ENCODE measurements at regions of chr10 and their contacts with region 1.

Region 1: DNA sequence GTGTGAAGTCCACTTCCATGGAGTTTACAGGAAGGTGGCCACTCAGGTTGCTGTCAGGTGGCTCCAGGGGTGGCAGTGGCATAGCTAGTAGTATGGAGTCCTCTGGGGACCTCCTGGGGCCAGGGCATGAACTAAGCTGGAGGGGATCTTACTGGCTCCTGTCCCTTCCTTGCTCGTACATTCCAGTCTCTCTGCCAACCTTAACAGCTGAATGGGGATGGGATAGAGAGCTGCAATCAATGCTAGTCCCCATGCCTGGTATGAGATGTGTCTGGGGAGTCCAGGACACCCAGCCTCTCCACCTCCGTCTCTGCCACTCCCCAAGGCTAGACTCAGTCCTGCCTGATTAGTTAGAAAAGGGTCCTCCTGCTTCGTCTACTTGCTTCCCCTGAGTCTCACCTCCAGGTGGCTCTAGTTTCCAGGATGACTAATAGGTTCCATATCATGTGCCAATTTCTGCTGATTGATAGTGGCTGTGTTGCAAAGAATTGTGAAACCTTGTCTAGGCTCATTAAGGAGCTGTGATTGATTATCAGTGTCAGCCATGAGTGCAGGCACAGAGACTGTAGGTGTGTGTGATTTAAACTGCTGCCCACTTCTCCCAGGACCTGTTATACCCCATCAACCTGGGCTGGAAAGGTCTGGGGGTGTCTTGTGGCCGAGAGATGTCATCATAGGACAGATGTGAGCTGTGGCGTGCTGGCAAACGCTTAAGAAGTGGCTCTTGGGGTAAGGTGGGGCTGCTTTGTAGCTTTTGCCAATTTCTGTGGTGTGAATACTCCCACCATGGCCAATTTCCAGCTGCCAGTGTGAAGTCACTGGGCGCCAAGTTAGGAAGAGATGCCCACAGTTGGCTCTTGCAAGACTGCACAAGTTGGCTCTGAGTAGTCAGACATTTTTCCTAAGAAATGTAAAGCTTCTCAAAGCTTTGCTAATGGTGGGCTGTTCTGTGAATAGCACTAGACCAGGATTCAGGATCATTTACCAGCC is 59.8 kb downstream of the COL13A1 start:
- DNase-seq: peak; percentile 99
- ATAC-seq: peak; percentile 38
- H3K4me3 ChIP-seq: no peak overlapping the region
- H3K27ac ChIP-seq: peak overlapping the region; percentile 95
- H3K4me1 ChIP-seq: peaks cover 63% of the 10 kb centered on the region
- H3K27me3 ChIP-seq: no peaks in the 10 kb centered on the region
- CTCF ChIP-seq: peak; percentile 92

Region 2: GRCh38 chr10:69795242-69795934 is 66.2 kb before region 1 on chr10:
- CTCF ChIA-PET with region 1: no interaction called
- POLR2A ChIA-PET with region 1: no interaction called
- intact Hi-C with region 1: no loop called
- DNase-seq: no peak
- ATAC-seq: no peak
- H3K4me3 ChIP-seq: no peak overlapping the region
- H3K27ac ChIP-seq: no peak overlapping the region
- H3K4me1 ChIP-seq: peaks cover 23% of the 10 kb centered on the region
- H3K27me3 ChIP-seq: no peaks in the 10 kb centered on the region
- CTCF ChIP-seq: no peak

Region 3: GRCh38 chr10:69807122-69807521 is 54.4 kb before region 1 on chr10:
- CTCF ChIA-PET with region 1: interaction called, 4 read pairs
- POLR2A ChIA-PET with region 1: interaction called, 3 read pairs
- intact Hi-C with region 1: loop called (anchors 1 kb)
- DNase-seq: peak; percentile 97
- ATAC-seq: peak; percentile 30
- H3K4me3 ChIP-seq: peak overlapping the region; percentile 22
- H3K27ac ChIP-seq: peak overlapping the region; percentile 21; the same call in 1 of the 2 replicates
- H3K4me1 ChIP-seq: peaks cover 43% of the 10 kb centered on the region
- H3K27me3 ChIP-seq: no peaks in the 10 kb centered on the region
- CTCF ChIP-seq: no peak

Region 4: GRCh38 chr10:69845574-69846292 is 15.8 kb before region 1 on chr10:
- CTCF ChIA-PET with region 1: no interaction called
- POLR2A ChIA-PET with region 1: interaction called, 5 read pairs
- intact Hi-C with region 1: loop called (anchors 1 kb)
- DNase-seq: peak; percentile 93
- ATAC-seq: peak; percentile 92
- H3K4me3 ChIP-seq: no peak overlapping the region
- H3K27ac ChIP-seq: peak overlapping the region; percentile 20
- H3K4me1 ChIP-seq: peaks cover 28% of the 10 kb centered on the region
- H3K27me3 ChIP-seq: no peaks in the 10 kb centered on the region
- CTCF ChIP-seq: no peak

Region 5: GRCh38 chr10:69874449-69874848 is 12.9 kb after region 1 on chr10:
- CTCF ChIA-PET with region 1: no interaction called
- POLR2A ChIA-PET with region 1: interaction called, 5 read pairs
- intact Hi-C with region 1: loop called (anchors 1 kb)
- DNase-seq: peak; percentile 99
- ATAC-seq: peak; percentile 97
- H3K4me3 ChIP-seq: no peak overlapping the region
- H3K27ac ChIP-seq: peak overlapping the region; percentile 77
- H3K4me1 ChIP-seq: peaks cover 38% of the 10 kb centered on the region
- H3K27me3 ChIP-seq: no peaks in the 10 kb centered on the region
- CTCF ChIP-seq: peak; percentile 30; the same call in 1 of the 2 replicates